HCT116 (cell line): ENCODE measurements at regions of chr19 and their contacts with region 1.

Region 1: DNA sequence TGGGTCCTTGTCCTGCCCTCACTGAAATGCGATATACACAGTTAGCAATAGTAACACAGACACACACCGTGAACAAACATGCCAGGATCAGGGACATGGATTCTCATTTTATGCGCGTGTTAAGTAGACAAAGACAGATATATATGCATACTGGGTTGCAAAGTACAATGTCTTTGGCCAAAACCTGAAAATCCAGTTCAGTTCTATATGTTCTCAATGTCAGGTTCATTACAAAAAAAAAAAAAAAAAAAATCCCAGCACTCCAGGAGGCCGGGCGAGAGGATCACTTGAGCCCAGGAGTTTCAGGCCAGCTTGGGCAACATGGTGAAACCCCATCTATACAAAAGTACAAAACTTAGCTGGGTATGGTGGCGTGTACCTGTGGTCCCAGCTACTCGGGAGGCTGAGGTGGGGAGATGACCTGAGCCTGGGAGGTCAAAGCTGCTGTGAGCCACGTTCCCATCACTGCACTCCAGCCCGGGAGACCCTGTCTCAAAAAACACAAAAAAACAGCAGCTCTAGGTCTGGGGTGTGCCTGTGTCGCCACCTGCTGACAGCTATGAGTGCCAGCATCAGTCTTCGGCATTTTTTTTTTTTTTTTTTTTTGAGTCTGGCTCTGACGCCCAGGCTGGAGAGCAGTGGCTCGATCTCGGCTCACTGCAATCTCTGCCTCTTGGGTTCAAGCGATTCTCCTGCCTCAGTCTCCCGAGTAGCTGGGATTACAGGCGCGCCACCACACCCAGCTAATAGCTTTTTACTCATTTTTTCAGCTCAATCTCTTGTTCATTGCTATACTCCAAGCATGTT is 10.3 kb downstream of the AP2S1 start:
- DNase-seq: no peak
- ATAC-seq: peak; percentile 56
- H3K4me3 ChIP-seq: no peak overlapping the region
- H3K27ac ChIP-seq: 0 out of 2 replicates have a peak overlapping the region, but pooled peaks have one; percentile 3
- H3K4me1 ChIP-seq: peaks cover 16 to 27% of the 10 kb centered on the region in 2 experiments
- H3K27me3 ChIP-seq: no peaks in the 10 kb centered on the region
- CTCF ChIP-seq: peak; percentile 82 to 85 (median 82)
- POLR2A ChIP-seq: no peak
- RAD21 ChIP-seq: peak; percentile 92

Region 2: GRCh38 chr19:46753420-46754155 is 86.8 kb before region 1 on chr19:
- CTCF ChIA-PET with region 1: interaction called, 27 read pairs
- POLR2A ChIA-PET with region 1: interaction called, 7 read pairs
- RAD21 ChIA-PET with region 1: interaction called, 4 to 7 read pairs
- intact Hi-C with region 1: loop called (anchors 1 kb)
- DNase-seq: no peak
- ATAC-seq: peak; percentile 72
- H3K4me3 ChIP-seq: no peak overlapping the region
- H3K27ac ChIP-seq: no peak overlapping the region
- H3K4me1 ChIP-seq: peaks cover 0 to 8% of the 10 kb centered on the region in 2 experiments; a peak in 3 of 4 replicates
- H3K27me3 ChIP-seq: no peaks in the 10 kb centered on the region
- CTCF ChIP-seq: peak; percentile 54 to 80 (median 75); a peak in 5 of 6 replicates
- POLR2A ChIP-seq: no peak
- RAD21 ChIP-seq: peak; percentile 53

Region 3: DNA sequence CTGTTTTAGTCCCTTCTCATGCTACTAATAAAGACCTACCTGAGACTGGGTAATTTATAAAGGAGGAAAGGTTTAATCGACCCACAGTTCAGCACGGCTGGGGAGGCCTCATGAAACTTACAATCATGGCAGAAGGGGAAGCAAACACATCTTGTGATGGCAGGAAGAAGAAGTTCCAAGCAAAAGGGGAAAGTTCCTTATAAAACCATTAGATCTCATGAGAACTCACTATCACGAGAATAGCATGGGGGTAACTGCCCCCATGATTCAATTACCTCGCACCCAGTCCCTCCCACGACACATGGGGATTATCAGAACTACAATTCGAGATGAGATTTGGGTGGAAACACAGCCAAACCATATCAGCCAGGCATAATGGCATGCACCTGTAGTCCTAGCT is 81.1 kb before region 1 on chr19:
- CTCF ChIA-PET with region 1: interaction called, 27 read pairs
- POLR2A ChIA-PET with region 1: interaction called, 7 read pairs
- RAD21 ChIA-PET with region 1: interaction called, 4 to 7 read pairs
- intact Hi-C with region 1: loop called (anchors 1 kb)
- DNase-seq: no peak
- ATAC-seq: no peak
- H3K4me3 ChIP-seq: no peak overlapping the region
- H3K27ac ChIP-seq: no peak overlapping the region
- H3K4me1 ChIP-seq: peaks cover 10 to 17% of the 10 kb centered on the region in 2 experiments
- H3K27me3 ChIP-seq: no peaks in the 10 kb centered on the region
- CTCF ChIP-seq: no peak
- POLR2A ChIP-seq: no peak
- RAD21 ChIP-seq: no peak

Region 4: DNA sequence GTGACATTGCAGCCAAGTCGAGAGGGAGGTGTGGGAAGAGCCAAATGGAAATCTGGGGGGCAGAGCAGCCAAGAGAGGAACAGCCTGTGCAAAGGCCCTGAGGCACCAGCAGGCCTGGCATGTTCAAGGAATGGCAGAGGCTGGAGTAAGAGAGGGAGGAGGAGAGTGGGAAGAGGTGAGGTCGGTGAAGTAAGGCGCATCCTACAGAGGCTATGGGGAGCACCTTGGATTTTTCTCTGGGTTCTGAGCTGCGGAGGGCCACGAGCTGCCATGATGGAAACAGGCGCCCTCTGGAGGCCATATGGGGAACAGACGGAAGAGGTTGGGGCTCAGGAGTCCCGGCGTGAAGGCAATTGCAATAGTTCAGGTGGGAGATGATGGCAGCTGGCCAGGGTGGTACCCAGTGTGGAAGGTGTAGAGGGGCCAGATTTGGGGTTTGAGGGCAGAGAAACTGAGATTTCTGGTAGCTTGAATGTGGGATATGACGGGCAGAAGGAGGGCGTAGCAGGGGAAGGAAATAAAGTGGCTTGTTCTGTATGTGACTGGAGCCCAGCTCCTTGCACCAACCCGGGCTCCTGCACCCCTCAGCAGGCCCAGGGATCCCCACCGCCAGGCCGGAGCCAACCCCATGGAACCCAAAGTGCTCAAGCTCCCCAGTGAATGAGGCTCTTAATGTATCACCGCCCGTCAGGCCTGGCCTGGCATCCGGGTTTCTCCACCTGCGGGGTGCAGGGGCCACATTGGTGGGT is 73.6 kb before region 1 on chr19:
- CTCF ChIA-PET with region 1: interaction called, 14 read pairs
- POLR2A ChIA-PET with region 1: no interaction called
- RAD21 ChIA-PET with region 1: interaction called, 4 to 7 read pairs
- intact Hi-C with region 1: no loop called
- DNase-seq: no peak
- ATAC-seq: peak; percentile 87
- H3K4me3 ChIP-seq: no peak overlapping the region
- H3K27ac ChIP-seq: no peak overlapping the region
- H3K4me1 ChIP-seq: peaks cover 15 to 16% of the 10 kb centered on the region in 2 experiments
- H3K27me3 ChIP-seq: no peaks in the 10 kb centered on the region
- CTCF ChIP-seq: peak; percentile 38 to 98 (median 92); a peak in 5 of 6 replicates
- POLR2A ChIP-seq: no peak
- RAD21 ChIP-seq: peak; percentile 45

Region 5: GRCh38 chr19:46990991-46991676 is 150.8 kb after region 1 on chr19:
- CTCF ChIA-PET with region 1: no interaction called
- POLR2A ChIA-PET with region 1: no interaction called
- RAD21 ChIA-PET with region 1: no interaction called
- intact Hi-C with region 1: loop called (anchors 5 kb)
- DNase-seq: peak; percentile 48
- ATAC-seq: peak; percentile 89
- H3K4me3 ChIP-seq: no peak overlapping the region
- H3K27ac ChIP-seq: no peak overlapping the region
- H3K4me1 ChIP-seq: peaks cover 0 to 3% of the 10 kb centered on the region in 2 experiments; a peak in 1 of 4 replicates
- H3K27me3 ChIP-seq: no peaks in the 10 kb centered on the region
- CTCF ChIP-seq: peak; percentile 87 to 94 (median 92)
- POLR2A ChIP-seq: no peak
- RAD21 ChIP-seq: peak; percentile 98

Region 6: DNA sequence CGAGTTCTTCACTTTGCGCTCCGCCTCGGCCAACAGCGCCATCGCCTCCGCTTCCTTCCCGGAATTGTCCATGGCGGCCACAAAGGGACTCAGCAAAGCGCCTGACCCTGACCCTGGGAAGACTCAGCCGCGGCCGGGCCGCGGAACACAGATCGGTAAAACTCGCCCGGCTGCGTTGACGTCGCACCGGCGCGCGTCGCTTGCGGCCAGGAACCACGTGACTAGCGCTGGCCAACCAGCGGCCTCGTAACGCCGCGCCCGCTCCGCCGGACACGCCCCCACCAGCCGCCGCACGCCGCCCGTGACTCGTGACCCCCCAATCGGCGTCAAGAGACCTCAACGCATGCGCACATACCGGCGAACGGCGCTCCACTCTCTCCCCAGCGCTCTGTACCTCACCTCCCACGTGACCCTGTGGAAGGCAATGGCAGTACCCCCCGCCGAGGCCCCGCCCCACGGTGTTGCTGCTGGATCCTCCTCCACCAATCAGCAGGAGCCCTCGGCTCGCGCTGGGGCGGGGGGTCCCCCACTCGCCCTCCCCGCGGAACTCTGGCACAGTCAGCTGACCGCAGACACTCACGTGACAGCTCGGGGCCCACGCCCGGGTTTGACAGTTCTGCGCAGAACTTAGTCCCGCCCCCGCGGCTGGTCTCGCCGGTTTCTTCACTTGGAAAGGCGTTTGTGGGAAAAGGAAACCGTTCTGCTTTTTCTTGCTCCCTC is 674.7 kb after region 1 on chr19 and contains the start of gene NAPA:
- CTCF ChIA-PET with region 1: no interaction called
- POLR2A ChIA-PET with region 1: no interaction called
- RAD21 ChIA-PET with region 1: no interaction called
- intact Hi-C with region 1: no loop called
- DNase-seq: peak; percentile 99
- ATAC-seq: peak; percentile 95
- H3K4me3 ChIP-seq: peak within 1 kb of the TSS; percentile 88 to 100
- H3K27ac ChIP-seq: peak within 1 kb of the TSS; percentile 64
- H3K4me1 ChIP-seq: peaks cover 8 to 26% of the 10 kb centered on the region in 2 experiments; a peak in 3 of 4 replicates
- H3K27me3 ChIP-seq: no peaks in the 10 kb centered on the region
- CTCF ChIP-seq: no peak
- POLR2A ChIP-seq: no peak
- RAD21 ChIP-seq: no peak; the same call in 1 of the 2 replicates
- total RNA-seq, gene NAPA: 58.8 TPM